Activated B cell treated with CpG ODN at 0.5 μM for 24 hours (primary cell): ENCODE measurements at regions of chr1 and their contacts with region 1.

Region 1: DNA sequence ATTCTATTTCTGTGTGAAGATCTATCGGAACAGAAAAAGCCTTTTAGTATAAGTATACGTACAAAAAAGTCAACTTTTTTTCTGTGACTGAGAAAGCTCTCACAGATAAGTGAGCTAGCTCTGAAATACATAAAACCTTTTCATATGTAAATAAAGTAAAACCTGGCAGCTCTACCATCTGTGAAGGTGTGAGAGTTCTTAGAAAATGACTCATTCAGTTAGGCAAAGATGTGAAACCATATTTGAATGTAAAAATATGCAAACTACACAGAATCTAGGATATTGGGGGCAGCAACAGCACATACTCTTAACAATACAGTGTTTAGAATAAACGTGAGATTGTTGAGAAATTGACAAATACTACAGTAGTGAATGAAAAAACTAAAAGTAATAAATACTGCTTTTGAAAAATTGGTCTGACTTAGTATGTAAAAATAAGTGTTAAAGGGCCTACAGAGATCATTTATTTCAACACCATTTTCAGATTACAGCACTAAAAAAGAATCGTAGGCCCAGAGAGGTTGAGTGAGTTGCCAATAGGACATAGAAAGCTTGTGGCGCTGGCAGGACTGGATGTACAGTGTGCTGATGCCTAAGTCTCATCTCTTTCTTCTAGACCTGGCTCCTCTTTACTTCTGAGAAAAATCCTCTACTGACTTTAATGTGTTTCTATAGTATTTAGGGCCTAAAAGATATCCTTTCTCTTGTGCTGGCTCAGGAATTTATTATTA is 19.8 kb downstream of the ATP6V1G3 start:
- DNase-seq: no peak
- ATAC-seq: peak; percentile 70
- H3K4me3 Mint-ChIP-seq: peak overlapping the region; percentile 69
- H3K27ac Mint-ChIP-seq: peak overlapping the region; percentile 81
- H3K4me1 Mint-ChIP-seq: peaks cover 63% of the 10 kb centered on the region
- H3K27me3 Mint-ChIP-seq: no peaks in the 10 kb centered on the region
- CTCF ChIP-seq: no peak

Region 2: GRCh38 chr1:198534548-198535418 is 14.1 kb after region 1 on chr1:
- CTCF ChIA-PET with region 1: interaction called, 3 read pairs
- POLR2A ChIA-PET with region 1: interaction called, 4 read pairs
- intact Hi-C with region 1: loop called (anchors 2 kb)
- DNase-seq: no peak
- ATAC-seq: peak; percentile 56
- H3K4me3 Mint-ChIP-seq: peak overlapping the region; percentile 55
- H3K27ac Mint-ChIP-seq: peak overlapping the region; percentile 80
- H3K4me1 Mint-ChIP-seq: peaks cover 84% of the 10 kb centered on the region
- H3K27me3 Mint-ChIP-seq: no peaks in the 10 kb centered on the region
- CTCF ChIP-seq: no peak

Region 3: GRCh38 chr1:198543670-198544260 is 23.1 kb after region 1 on chr1:
- CTCF ChIA-PET with region 1: no interaction called
- POLR2A ChIA-PET with region 1: interaction called, 5 read pairs
- intact Hi-C with region 1: loop called (anchors 1 kb)
- DNase-seq: no peak
- ATAC-seq: peak; percentile 85
- H3K4me3 Mint-ChIP-seq: peak overlapping the region; percentile 62
- H3K27ac Mint-ChIP-seq: peak overlapping the region; percentile 92
- H3K4me1 Mint-ChIP-seq: peaks cover 66% of the 10 kb centered on the region
- H3K27me3 Mint-ChIP-seq: no peaks in the 10 kb centered on the region
- CTCF ChIP-seq: no peak

Region 4: DNA sequence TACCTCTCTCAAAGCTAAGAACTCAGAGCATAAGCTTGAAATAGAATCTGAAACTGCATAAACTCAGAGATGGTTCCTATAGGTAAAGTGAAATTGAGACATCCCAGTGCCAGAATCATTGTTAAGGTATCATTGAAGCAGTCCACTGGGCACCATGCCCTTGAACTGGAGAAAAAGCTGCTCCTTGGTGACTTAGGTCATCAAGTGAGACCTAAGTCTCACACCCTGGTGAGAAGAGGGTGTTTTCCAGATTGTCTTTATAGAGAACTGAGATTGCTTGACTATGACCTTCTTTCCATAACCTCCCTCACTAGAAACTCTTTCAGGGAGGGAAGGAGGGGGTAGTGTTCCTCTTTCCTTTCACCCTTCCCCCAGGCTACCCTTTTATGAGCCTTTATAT is 29.2 kb after region 1 on chr1:
- CTCF ChIA-PET with region 1: no interaction called
- POLR2A ChIA-PET with region 1: interaction called, 5 read pairs
- intact Hi-C with region 1: loop called (anchors 1 kb)
- DNase-seq: no peak
- ATAC-seq: peak; percentile 90
- H3K4me3 Mint-ChIP-seq: peak overlapping the region; percentile 63
- H3K27ac Mint-ChIP-seq: peak overlapping the region; percentile 89
- H3K4me1 Mint-ChIP-seq: peaks cover 67% of the 10 kb centered on the region
- H3K27me3 Mint-ChIP-seq: no peaks in the 10 kb centered on the region
- CTCF ChIP-seq: no peak

Region 5: GRCh38 chr1:198575798-198576641 is 55.3 kb after region 1 on chr1:
- CTCF ChIA-PET with region 1: interaction called, 5 read pairs
- POLR2A ChIA-PET with region 1: interaction called, 3 read pairs
- intact Hi-C with region 1: loop called (anchors 1 kb)
- DNase-seq: no peak
- ATAC-seq: peak; percentile 89
- H3K4me3 Mint-ChIP-seq: peak overlapping the region; percentile 21
- H3K27ac Mint-ChIP-seq: peak overlapping the region; percentile 82
- H3K4me1 Mint-ChIP-seq: peaks cover 30% of the 10 kb centered on the region
- H3K27me3 Mint-ChIP-seq: no peaks in the 10 kb centered on the region
- CTCF ChIP-seq: no peak